Mucosa of descending colon (tissue), 3 donors: ENCODE measurements at regions of chr12 and their contacts with region 1.

Region 1: DNA sequence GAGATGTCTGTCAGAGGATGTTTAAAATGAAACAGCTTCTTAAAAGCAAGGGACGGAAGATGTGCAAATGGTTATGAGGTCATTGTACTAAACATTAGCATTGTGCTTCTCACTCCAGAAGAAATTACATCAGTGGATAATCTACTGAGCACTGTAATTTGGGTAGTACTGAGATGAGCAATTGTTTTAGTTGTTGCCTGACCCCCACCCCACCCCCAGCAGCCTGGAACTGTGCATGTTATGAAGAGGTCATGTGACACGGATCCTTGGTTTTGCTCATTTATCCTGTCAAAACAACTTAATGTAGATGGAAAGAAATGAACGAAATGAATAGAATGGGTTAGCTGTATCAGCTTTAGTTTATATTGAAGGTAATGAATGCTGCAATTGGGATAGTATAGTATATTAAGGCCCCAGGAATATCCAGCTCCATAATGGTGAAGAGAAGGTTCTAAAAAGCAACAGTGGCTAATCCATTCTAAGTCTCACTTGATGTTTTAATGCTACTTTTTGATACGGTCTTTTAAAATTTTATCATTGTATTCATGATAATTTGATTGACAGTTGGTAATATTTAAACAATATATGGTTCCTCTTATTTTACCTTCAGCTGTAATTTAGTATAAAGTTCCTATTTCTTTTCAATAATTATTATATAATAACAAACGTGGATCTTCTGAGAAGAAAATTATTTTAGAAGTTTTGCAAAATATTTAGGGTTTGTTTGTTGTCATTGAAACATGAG is 58.5 kb downstream of the WNK1 start:
- DNase-seq: no peak
- ATAC-seq: no peak
- H3K4me3 ChIP-seq: no peak overlapping the region
- H3K4me1 ChIP-seq: peaks cover 5% of the 10 kb centered on the region
- CTCF ChIP-seq: no peak

Region 2: DNA sequence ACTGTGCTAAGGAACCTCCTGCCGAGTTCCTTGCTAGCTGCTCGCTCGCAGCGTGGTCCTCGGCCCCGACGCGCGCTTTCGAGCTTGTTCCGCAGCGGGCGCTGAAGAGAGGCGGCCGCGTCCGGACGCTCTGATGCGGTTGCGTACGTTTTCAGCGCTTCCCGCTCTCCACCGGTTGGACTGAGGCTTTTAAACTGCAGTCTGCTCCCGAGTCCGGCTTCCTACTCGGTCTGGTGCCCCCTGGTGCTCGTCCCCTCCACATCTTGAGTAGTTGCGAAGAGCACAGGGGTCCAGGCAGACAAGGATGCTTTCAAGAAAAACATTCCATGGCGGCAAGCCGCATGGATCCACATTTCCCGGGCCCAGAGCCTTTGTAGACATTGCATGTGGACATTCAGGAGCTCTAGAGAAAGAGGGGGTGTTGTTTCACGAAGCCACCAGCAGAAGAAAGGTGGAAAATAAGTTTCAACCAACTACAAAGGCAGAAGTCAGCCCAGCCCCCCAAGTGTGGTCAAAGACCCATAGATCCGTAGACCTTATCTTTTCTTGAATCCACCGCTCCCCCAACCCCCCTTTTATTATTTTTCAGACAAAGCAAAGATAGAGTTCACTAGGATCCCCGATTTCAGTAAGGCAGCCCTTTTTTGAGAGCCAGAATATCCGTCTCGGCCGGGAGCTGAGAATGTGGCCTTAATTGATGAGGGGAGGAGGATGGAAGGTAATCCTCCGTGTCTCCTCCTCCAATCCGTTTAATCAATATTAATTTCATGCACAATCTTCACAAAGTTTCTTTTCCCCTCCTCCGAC is 59.4 kb before region 1 on chr12:
- intact Hi-C with region 1: loop called in 1 of 2 experiments (anchors 10 kb)
- DNase-seq: peak; percentile 91 to 95 (median 93)
- ATAC-seq: peak; percentile 66
- H3K4me3 ChIP-seq: no peak overlapping the region
- H3K4me1 ChIP-seq: peaks cover 12% of the 10 kb centered on the region
- CTCF ChIP-seq: peak; percentile 64

Region 3: GRCh38 chr12:857611-858010 is 46.8 kb after region 1 on chr12:
- intact Hi-C with region 1: no loop called
- DNase-seq: no peak
- ATAC-seq: no peak
- H3K4me3 ChIP-seq: no peak overlapping the region
- H3K4me1 ChIP-seq: no peaks in the 10 kb centered on the region
- CTCF ChIP-seq: no peak